ENCODE measurements at regions of chr6 and their contacts with region 1.

Region 1: DNA sequence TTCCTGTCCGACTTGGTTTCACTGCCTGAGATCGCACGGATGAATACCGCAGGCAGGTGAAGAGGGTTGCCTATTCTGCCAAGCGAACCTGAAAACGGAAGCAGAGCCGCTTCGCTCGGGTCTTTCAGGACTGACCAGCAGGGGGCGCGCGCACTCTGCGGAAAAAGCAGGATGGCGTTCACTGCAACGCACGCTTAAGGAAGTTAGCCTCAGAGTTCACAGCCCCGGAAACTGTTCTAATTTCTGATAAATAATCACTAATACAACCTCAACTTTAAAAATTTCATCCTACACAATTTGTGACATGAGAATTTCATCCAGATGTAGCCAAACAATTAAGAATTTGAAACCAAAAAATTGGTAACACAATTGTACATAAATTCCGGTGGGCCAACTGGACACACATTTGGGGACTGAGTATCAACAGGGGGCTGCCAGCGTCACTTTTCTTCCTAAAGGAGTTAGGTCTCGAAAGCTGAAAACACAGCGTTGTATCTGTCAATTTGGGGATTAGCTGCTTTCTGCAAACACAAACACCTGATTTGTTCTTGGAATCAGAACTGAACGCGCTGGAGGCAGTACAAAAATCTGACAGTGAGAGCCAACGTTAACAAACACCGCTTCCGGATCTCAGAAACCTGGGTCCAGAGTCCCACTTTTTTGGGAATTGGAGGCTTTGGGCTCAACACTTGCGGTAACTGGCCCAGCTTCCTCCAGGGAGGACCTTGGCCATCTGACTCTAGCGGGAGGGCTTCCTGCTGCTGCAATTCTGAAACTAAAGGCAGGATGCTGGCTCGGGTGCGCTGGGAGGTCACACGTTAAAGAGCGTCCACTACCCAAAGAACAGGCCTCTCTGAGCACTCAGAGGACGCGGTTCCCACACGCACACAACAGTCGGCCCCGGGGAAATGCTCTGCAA is 8.8 kb downstream of the PXDC1 start:
- DNase-seq: peak; percentile 83

Region 2: GRCh38 chr6:3977875-3978711 is 235.4 kb after region 1 on chr6:
- in situ Hi-C with region 1: loop called (anchors 25 kb)
- DNase-seq: peak; percentile 74

Region 3: GRCh38 chr6:4125500-4125899 is 382.8 kb after region 1 on chr6:
- in situ Hi-C with region 1: no loop called
- DNase-seq: no peak